ENCODE measurements at regions of chr6 and their contacts with region 1.

Region 1: GRCh38 chr6:139250296-139251044 is 41.3 kb downstream of the TXLNB start:
- DNase-seq: peak; percentile 66
- H3K4me3 Mint-ChIP-seq: no peak overlapping the region
- H3K27ac Mint-ChIP-seq: peak overlapping the region; percentile 20
- H3K4me1 Mint-ChIP-seq: peaks cover 40% of the 10 kb centered on the region
- H3K27me3 Mint-ChIP-seq: no peaks in the 10 kb centered on the region

Region 2: DNA sequence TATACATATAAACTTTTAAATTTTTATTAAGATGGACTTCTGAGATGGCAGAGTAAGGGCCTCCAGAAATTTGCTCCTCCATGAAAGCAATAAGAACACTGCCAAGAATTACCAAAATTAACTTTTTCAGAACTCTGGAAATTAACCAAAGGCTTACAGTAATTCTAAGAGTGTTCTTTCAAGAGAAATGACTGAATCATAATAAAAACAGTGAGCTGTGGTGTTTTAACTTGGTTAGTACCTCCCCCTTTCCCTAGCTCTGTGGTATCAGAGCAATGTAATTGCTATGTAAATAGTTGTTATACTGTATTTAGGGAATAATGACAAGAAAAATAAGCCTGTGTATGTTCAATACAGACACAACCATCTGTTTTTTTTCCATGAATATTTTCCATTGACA is 96.6 kb before region 1 on chr6:
- CTCF ChIA-PET with region 1: no interaction called
- intact Hi-C with region 1: no loop called
- DNase-seq: no peak
- H3K4me3 Mint-ChIP-seq: no peak overlapping the region
- H3K27ac Mint-ChIP-seq: peak overlapping the region; percentile 89
- H3K4me1 Mint-ChIP-seq: peaks cover 81% of the 10 kb centered on the region
- H3K27me3 Mint-ChIP-seq: no peaks in the 10 kb centered on the region

Region 3: DNA sequence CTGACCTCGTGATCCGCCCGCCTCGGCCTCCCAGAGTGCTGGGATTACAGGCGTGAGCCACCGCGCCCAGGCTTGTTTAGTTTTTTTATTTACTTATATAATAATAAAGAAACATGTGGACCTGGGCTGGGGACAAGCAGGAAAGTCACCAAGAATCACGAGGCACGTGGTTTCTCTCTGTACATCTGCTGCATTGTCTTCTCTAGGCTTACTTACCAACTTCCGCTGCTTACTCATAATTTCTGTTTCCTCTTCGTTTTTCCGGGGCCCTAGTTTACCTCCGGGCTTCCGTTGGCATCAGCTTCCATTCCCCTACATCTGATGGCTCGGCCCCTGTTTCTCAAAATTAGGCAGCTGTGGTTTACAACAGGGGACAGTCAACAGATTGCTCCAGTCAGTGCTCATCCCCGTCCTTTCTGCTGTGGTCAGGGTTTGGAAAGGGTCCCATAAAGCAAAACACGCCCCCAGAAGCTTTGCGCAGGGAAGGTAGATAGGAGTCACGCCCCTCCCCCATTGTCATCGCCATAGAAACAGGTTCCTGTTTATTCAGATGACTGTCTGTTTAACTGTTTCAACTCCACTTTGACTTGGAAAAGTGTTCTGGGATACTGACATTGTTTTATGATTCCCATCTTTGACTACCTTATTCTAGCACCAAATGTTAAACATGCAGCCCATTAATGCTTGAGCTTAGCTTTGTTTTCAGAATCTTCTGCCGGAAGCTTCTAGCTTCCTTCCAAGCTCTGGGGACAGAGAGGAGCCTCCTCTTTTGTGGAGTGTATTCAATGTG is 73.2 kb after region 1 on chr6:
- CTCF ChIA-PET with region 1: interaction called, 3 read pairs
- intact Hi-C with region 1: loop called (anchors 2 kb)
- DNase-seq: peak; percentile 88
- H3K4me3 Mint-ChIP-seq: peak overlapping the region; percentile 77
- H3K27ac Mint-ChIP-seq: peak overlapping the region; percentile 97
- H3K4me1 Mint-ChIP-seq: peaks cover 31% of the 10 kb centered on the region
- H3K27me3 Mint-ChIP-seq: no peaks in the 10 kb centered on the region

Region 4: DNA sequence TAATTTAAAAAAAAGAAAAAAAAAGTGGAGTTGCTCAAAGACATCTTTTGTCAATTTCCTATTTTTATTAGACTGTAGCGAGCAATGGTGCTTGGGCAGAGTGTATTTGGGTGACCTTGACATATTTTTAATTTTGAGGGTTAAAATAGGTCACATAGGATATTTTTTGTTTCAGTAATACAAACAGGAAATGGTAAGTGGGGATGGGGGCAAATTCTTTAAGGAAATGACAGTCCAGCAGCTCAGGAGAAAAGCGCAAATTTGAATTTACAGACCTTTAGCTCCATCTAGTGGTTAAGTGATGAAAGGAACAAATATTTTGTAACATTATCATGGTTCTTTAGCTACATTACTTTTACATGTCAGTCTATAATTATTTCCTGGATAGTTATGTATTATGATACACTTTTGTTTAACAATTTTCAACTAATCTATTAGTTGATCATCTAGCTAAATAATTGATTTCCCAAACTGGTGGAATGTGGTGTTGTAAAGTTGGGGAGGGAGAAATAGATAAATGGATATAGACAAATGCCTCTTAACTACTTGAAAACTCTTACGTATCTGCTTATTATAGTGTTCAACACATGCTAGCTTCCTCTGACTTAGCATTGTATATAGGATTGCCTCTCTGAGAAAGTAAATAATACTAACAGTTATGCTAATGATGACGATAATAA is 114.0 kb after region 1 on chr6:
- CTCF ChIA-PET with region 1: interaction called, 7 read pairs
- intact Hi-C with region 1: loop called (anchors 1 kb)
- DNase-seq: no peak
- H3K4me3 Mint-ChIP-seq: no peak overlapping the region
- H3K27ac Mint-ChIP-seq: no peak overlapping the region
- H3K4me1 Mint-ChIP-seq: peaks cover 26% of the 10 kb centered on the region
- H3K27me3 Mint-ChIP-seq: no peaks in the 10 kb centered on the region